ENCODE measurements at regions of chr12 and their contacts with region 1.

Region 1: DNA sequence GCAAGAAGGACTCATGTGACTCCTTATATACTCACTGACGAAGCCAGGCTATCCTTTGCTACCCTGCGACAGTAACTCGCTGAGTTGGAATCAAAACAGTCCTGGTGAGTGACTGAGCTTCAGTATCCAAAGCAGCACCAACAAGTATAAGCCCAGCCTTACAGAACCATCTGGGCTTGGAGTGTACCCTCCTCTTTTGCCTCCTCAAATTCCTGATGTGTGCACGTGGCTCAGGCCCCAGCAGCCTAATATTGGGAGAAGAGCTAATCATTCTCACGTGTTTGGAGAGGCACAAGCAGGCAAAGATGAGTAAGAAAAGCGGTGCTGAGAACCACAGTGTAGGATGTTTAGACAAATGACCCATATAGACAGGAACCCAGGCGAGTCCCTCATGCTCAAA is 34.4 kb downstream of the PPTC7 start:
- DNase-seq: no peak
- ATAC-seq: no peak
- H3K4me3 ChIP-seq: no peak overlapping the region
- H3K4me3 Mint-ChIP-seq: no peak overlapping the region
- H3K27ac ChIP-seq: no peak overlapping the region
- H3K27ac Mint-ChIP-seq: no peak overlapping the region
- H3K4me1 ChIP-seq: peaks cover 3 to 5% of the 10 kb centered on the region in 2 donors
- H3K4me1 Mint-ChIP-seq: peaks cover 26% of the 10 kb centered on the region
- H3K27me3 ChIP-seq: no peaks in the 10 kb centered on the region
- H3K27me3 Mint-ChIP-seq: no peaks in the 10 kb centered on the region
- CTCF ChIP-seq: no peak

Region 2: DNA sequence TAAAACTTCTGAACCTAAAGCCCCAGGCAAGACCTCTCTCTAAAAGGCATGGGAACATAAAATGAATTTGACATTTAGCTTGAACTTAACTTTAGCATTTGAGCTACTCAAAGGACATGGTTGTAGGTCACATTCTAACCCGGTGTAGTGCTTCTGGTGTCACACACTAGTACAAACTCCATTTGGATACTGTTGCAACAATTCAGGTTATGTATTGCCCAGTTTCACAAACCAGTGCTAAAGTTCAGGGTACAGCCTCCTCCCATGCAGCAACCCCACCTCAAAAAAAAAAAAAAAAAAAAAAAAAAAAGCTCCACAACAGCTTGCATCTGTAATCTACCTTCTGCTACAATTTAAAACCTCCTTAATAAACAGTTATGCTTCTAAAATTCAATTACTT is 26.6 kb after region 1 on chr12:
- CTCF ChIA-PET with region 1: interaction called, 12 read pairs
- POLR2A ChIA-PET with region 1: no interaction called
- intact Hi-C with region 1: loop called (anchors 5 kb)
- DNase-seq: no peak
- ATAC-seq: no peak
- H3K4me3 ChIP-seq: no peak overlapping the region
- H3K4me3 Mint-ChIP-seq: peak overlapping the region; percentile 45
- H3K27ac ChIP-seq: peak overlapping the region in 1 of 2 donors; percentile 46
- H3K27ac Mint-ChIP-seq: peak overlapping the region; percentile 50
- H3K4me1 ChIP-seq: peaks cover 33 to 41% of the 10 kb centered on the region in 2 donors
- H3K4me1 Mint-ChIP-seq: peaks cover 53% of the 10 kb centered on the region
- H3K27me3 ChIP-seq: no peaks in the 10 kb centered on the region
- H3K27me3 Mint-ChIP-seq: no peaks in the 10 kb centered on the region
- CTCF ChIP-seq: no peak

Region 3: DNA sequence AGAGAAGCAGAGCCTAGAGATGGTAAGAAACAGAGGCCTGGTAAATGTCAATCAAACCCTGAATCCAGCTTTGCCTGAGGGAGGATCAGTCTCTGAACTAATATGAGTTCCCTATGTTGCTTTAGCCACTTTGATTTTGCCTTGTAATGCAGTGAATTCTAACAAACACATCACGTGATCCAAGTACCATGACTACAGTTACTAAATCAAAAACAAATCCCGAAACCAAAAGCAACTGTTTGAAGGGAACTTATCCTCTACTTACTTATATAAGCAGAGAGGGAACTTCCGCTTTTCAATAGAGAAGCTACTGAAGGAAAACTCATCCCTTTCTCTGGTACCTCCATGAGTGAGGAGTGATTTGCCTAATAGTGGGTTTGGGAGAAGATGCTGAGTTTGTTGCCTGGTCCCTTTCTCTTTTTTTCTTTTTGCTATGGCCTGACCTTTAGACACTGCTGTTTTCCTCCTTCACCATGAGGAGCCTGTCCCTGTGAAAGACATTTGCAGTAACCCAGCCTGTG is 42.2 kb after region 1 on chr12:
- CTCF ChIA-PET with region 1: interaction called, 34 read pairs
- POLR2A ChIA-PET with region 1: no interaction called
- intact Hi-C with region 1: no loop called
- DNase-seq: peak; percentile 92
- ATAC-seq: peak; percentile 84
- H3K4me3 ChIP-seq: peak overlapping the region in 2 of 5 experiments; percentile 25 to 40
- H3K4me3 Mint-ChIP-seq: peak overlapping the region; percentile 74
- H3K27ac ChIP-seq: peak overlapping the region; percentile 89 to 91
- H3K27ac Mint-ChIP-seq: peak overlapping the region; percentile 95
- H3K4me1 ChIP-seq: peaks cover 35 to 47% of the 10 kb centered on the region in 2 donors
- H3K4me1 Mint-ChIP-seq: peaks cover 43% of the 10 kb centered on the region
- H3K27me3 ChIP-seq: no peaks in the 10 kb centered on the region
- H3K27me3 Mint-ChIP-seq: no peaks in the 10 kb centered on the region
- CTCF ChIP-seq: no peak